ENCODE measurements at regions of chr16 and their contacts with region 1.

Region 1: DNA sequence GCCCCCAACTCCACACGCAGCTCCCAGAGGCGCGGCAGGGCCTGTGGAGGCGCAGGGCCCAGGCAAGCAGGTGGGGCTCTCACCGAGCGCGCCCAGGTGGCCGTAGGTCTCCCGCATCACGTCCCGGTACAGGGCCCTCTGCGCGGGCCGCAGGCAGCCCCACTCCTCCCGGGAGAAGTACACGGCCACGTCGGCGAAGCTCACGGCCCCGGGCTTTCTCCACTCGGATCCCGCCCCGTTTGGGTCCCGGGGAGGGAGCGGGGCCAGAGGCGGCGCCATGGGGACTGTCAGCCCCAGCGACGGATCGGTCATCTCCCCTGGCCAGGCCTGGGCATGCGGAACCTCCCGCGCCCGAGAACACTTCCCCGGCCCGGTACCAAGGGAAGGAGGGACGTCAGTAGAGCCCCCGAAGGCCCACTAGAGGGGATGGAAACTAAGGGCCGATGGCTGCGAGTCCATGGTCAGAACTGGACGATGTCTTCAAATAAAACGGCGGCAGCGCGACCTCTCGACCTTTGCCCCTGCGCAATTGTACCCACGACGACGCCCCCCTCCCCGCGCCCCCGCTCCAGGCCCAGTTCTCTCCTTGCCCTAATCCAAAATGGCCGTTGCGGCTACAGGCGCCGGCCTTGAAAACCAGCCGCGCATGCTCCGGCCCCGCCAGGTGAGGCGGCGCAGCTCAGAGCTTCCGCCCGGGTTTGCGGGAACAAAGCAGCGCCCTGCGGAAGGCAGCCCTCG is at the start of gene ZNF747:
- DNase-seq: peak; percentile 94
- ATAC-seq: peak; percentile 83
- H3K4me3 Mint-ChIP-seq: peak within 1 kb of the TSS; percentile 86
- H3K27ac Mint-ChIP-seq: peak within 1 kb of the TSS; percentile 99
- H3K4me1 Mint-ChIP-seq: peaks cover 40% of the 10 kb centered on the region
- H3K27me3 Mint-ChIP-seq: no peaks in the 10 kb centered on the region
- CTCF ChIP-seq: no peak
- total RNA-seq, gene ZNF747: 6.7 to 7.9 TPM

Region 2: DNA sequence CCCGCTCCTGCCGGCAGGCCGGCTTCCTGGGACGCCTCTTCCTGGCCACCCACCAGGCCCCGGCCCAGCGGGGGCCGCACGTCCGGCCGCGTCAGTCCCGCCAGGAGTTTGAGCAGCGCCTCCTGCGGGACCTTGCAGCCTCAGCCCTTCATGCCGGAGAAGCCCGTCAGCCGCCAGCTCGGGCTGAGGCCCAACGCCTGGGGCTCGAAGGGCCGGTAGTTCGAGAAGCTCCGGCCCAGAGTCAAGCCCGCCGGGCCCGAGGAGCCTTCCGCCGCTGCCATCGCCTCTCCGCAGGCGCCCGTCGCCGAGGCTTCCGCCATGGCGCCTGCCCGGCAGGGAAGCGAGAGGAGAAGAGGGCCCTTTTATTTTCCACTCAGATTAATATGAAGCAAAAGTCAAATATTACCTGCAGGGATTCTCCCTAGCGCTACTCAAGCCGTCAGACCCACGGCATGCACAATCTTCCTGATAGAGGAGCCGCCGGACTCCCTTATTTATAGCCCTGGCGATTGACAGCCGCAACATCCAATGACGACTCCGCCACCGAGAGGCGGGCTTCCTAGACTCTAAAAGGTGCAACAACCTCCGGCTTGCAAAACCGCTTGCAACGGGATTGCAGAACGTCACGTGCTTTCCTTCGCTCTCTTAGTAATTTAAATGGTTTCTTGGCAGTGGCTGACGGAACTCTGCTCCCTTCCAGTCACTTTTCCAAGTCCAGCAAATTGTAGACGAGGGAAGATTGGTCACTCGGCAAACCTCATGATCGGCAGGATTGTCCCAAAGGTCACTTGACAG is 88.9 kb before region 1 on chr16 and contains the start of gene SEPHS2:
- CTCF ChIA-PET with region 1: interaction called, 13 read pairs
- POLR2A ChIA-PET with region 1: interaction called, 4 read pairs
- intact Hi-C with region 1: no loop called
- DNase-seq: peak; percentile 100
- ATAC-seq: peak; percentile 97
- H3K4me3 Mint-ChIP-seq: peak within 1 kb of the TSS; percentile 93
- H3K27ac Mint-ChIP-seq: peak within 1 kb of the TSS; percentile 91
- H3K4me1 Mint-ChIP-seq: peaks cover 39% of the 10 kb centered on the region
- H3K27me3 Mint-ChIP-seq: no peaks in the 10 kb centered on the region
- CTCF ChIP-seq: peak; percentile 23
- total RNA-seq, gene SEPHS2: 51.8 to 54.0 TPM

Region 3: GRCh38 chr16:30472328-30472942 is 62.1 kb before region 1 on chr16 and contains the start of gene ITGAL:
- CTCF ChIA-PET with region 1: no interaction called
- POLR2A ChIA-PET with region 1: interaction called, 20 read pairs
- intact Hi-C with region 1: no loop called
- DNase-seq: peak; percentile 94
- ATAC-seq: peak; percentile 69
- H3K4me3 Mint-ChIP-seq: peak within 1 kb of the TSS; percentile 100
- H3K27ac Mint-ChIP-seq: peak within 1 kb of the TSS; percentile 96
- H3K4me1 Mint-ChIP-seq: peaks cover 54% of the 10 kb centered on the region
- H3K27me3 Mint-ChIP-seq: no peaks in the 10 kb centered on the region
- CTCF ChIP-seq: no peak
- total RNA-seq, gene ITGAL: 274 to 285 TPM

Region 4: GRCh38 chr16:30551781-30552180 is 17.2 kb after region 1 on chr16:
- CTCF ChIA-PET with region 1: interaction called, 18 read pairs
- POLR2A ChIA-PET with region 1: interaction called, 42 read pairs
- intact Hi-C with region 1: no loop called
- DNase-seq: peak; percentile 73
- ATAC-seq: peak; percentile 86
- H3K4me3 Mint-ChIP-seq: peak overlapping the region; percentile 53
- H3K27ac Mint-ChIP-seq: peak overlapping the region; percentile 94
- H3K4me1 Mint-ChIP-seq: peaks cover 59% of the 10 kb centered on the region
- H3K27me3 Mint-ChIP-seq: no peaks in the 10 kb centered on the region
- CTCF ChIP-seq: no peak

Region 5: GRCh38 chr16:30571695-30572600 is 37.4 kb after region 1 on chr16 and contains the start of gene ZNF688:
- CTCF ChIA-PET with region 1: interaction called, 22 read pairs
- POLR2A ChIA-PET with region 1: interaction called, 42 read pairs
- intact Hi-C with region 1: no loop called
- DNase-seq: peak; percentile 96
- ATAC-seq: peak; percentile 81
- H3K4me3 Mint-ChIP-seq: peak within 1 kb of the TSS; percentile 92
- H3K27ac Mint-ChIP-seq: peak within 1 kb of the TSS; percentile 93
- H3K4me1 Mint-ChIP-seq: peaks cover 41% of the 10 kb centered on the region
- H3K27me3 Mint-ChIP-seq: no peaks in the 10 kb centered on the region
- CTCF ChIP-seq: no peak
- total RNA-seq, gene ZNF688: 4.7 to 5.5 TPM

Region 6: DNA sequence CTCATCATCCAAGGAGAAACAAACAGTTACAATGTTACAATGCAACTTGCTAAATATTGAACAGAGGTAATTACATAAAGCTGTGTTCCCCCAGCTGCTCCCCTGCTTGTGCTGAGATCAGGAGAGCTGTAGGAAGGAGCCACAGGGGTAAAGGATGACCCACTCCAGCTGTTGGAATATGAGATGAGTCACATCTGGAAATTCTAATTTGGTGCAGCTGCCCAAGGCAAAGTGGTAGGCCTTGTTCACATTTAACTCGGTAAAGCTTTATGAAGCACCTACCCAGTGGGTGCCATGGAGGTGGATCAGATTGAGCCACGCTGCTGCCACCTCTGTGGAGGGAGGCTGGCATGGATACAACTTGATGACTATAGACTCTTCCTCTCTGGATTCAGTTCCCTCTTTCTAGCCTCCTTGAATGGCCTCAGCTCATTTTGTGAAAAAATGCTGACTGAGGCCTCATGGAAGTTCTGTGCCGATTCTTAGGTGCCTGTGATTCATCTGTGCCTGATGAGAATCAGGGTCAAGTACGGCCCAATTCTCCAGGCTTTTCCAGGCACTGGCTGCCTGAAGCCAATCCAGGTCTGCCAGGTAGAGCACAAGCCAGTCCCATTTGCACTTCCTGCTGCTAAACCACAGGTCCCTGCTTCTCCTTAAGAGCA is 68.2 kb after region 1 on chr16:
- CTCF ChIA-PET with region 1: interaction called, 39 read pairs
- POLR2A ChIA-PET with region 1: interaction called, 14 read pairs
- intact Hi-C with region 1: no loop called
- DNase-seq: no peak
- ATAC-seq: no peak
- H3K4me3 Mint-ChIP-seq: no peak overlapping the region
- H3K27ac Mint-ChIP-seq: no peak overlapping the region
- H3K4me1 Mint-ChIP-seq: peaks cover 9% of the 10 kb centered on the region
- H3K27me3 Mint-ChIP-seq: no peaks in the 10 kb centered on the region
- CTCF ChIP-seq: no peak

Region 7: DNA sequence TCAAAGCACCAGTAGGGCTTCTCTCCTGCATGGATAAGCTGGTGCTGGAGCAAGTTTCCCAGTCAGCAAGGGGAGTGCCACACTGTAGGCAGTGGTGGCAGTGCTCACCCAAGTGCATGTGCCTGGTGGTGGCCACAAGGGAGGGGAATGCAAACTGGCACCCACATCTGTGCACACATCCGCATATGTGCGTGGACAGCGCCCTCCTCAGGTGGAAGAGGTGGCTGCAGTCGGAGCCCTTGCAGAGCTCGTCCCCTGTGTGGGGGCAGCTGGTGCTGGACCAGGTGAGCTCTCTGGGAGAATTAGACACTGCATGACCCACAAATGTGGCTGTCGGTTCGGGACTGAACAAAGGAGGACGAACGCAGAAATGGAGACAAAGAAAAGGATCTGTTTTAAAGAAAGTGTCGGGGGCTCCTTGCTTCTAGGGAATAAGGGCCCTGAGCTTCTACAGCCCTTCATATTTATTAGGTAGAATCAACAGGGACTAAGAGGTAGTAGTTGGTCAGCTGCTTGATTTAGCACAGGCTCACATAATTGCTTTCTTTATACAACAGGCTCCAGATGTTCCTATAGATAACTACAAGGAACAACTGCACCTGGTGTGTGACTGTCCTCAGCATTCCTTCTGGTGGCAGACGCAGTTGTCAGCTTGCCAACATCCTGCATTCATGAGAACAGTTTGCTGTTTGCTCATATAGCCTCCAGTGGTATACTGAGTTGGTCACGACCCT is 81.0 kb after region 1 on chr16:
- CTCF ChIA-PET with region 1: interaction called, 14 read pairs
- POLR2A ChIA-PET with region 1: interaction called, 11 read pairs
- intact Hi-C with region 1: no loop called
- DNase-seq: peak; percentile 94
- ATAC-seq: peak; percentile 90
- H3K4me3 Mint-ChIP-seq: no peak overlapping the region
- H3K27ac Mint-ChIP-seq: no peak overlapping the region
- H3K4me1 Mint-ChIP-seq: peaks cover 1% of the 10 kb centered on the region
- H3K27me3 Mint-ChIP-seq: no peaks in the 10 kb centered on the region
- CTCF ChIP-seq: peak; percentile 90

Region 8: DNA sequence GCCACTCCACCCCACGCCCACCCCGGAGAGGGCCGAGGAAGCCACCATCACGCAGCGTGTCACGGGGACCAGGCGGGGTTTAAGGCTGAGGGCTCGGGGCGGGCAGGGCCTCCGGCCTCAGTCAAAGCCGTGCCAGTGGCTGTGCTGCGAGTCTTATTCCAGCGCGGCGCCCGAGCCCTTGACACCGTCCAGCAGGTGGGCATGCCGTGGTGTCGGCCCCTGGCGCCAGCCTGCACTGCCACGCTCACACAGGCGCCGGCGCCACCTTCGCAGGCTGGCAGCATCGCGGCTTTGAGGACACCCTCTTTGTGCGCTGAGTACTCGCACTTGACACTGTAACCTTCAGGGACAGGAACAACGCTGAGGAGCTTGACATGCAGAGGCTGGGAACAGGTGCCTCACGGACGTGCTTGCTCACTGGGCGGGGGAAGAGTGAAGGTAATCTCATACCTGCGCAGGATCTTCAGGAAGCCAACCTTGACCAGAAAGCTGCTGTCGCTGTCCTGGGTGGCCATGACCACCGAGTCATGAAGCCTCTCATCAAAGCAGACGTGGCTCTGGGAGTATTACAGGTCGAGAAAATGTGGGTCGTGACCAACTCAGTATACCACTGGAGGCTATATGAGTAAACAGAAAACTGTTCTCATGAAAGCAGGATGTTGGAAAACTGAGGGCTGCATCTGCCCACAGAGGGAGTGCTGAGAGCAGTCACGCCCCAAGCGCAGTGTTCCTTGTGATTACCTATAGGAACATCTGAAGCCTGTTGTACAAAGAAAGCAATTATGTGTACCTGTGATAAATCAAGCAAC is 286.6 kb after region 1 on chr16:
- CTCF ChIA-PET with region 1: no interaction called
- POLR2A ChIA-PET with region 1: no interaction called
- intact Hi-C with region 1: no loop called
- DNase-seq: no peak
- ATAC-seq: no peak
- H3K4me3 Mint-ChIP-seq: no peak overlapping the region
- H3K27ac Mint-ChIP-seq: no peak overlapping the region
- H3K4me1 Mint-ChIP-seq: no peaks in the 10 kb centered on the region
- H3K27me3 Mint-ChIP-seq: no peaks in the 10 kb centered on the region
- CTCF ChIP-seq: no peak

Region 9: GRCh38 chr16:31636433-31636832 is 1101.9 kb after region 1 on chr16:
- CTCF ChIA-PET with region 1: no interaction called
- POLR2A ChIA-PET with region 1: no interaction called
- intact Hi-C with region 1: no loop called
- DNase-seq: no peak
- ATAC-seq: no peak
- H3K4me3 Mint-ChIP-seq: no peak overlapping the region
- H3K27ac Mint-ChIP-seq: no peak overlapping the region
- H3K4me1 Mint-ChIP-seq: no peaks in the 10 kb centered on the region
- H3K27me3 Mint-ChIP-seq: peaks cover 11% of the 10 kb centered on the region
- CTCF ChIP-seq: no peak

Measured in activated CD8-positive, alpha-beta T cell treated with anti-CD3 and anti-CD28 coated beads for 36 hours (primary cell).